Psoas muscle (tissue), 8 donors: ENCODE measurements at regions of chr14 and their contacts with region 1.

Region 1: GRCh38 chr14:90624728-90625400 is 191.4 kb downstream of the TTC7B start:
- DNase-seq: no peak
- ATAC-seq: peak; percentile 57 to 67 (median 64)
- H3K4me3 ChIP-seq: peak overlapping the region; percentile 26
- H3K27ac ChIP-seq: peak overlapping the region; percentile 94
- H3K4me1 ChIP-seq: peaks cover 55% of the 10 kb centered on the region
- H3K27me3 ChIP-seq: no peaks in the 10 kb centered on the region
- CTCF ChIP-seq: no peak

Region 2: DNA sequence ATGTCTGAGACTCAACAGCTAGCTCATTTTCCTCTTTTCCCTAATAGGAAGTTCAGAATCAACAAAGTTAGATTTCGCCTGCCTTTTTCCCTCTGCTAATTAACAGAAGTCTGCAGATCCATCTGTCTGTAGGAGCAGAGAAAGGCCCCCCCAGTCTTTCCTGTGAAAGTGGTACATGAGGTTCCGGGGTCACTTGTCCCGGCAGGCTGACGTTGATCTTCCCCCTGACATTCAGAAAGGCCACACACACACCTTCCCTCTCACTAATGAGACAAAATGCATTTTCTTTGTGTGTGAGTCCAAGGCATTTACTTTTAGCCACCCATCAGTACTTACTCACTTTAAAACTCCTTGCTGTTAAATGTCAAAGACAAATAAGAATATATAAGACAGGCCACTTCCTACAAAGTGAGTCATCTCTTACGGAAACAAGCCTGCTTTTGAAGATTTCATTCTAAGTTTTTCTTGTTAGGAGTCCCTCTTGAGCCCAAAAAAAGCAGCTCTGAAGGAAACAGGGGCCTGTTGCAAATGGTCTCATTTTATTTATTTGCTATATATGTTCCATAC is 52.7 kb after region 1 on chr14:
- intact Hi-C with region 1: loop called in 1 of 2 experiments (anchors 5 kb)
- DNase-seq: no peak
- ATAC-seq: no peak
- H3K4me3 ChIP-seq: no peak overlapping the region
- H3K27ac ChIP-seq: peak overlapping the region; percentile 93
- H3K4me1 ChIP-seq: peaks cover 66% of the 10 kb centered on the region
- H3K27me3 ChIP-seq: no peaks in the 10 kb centered on the region
- CTCF ChIP-seq: no peak